Mucosa of descending colon (tissue), 3 donors: ENCODE measurements at regions of chrX and their contacts with region 1.

Region 1: DNA sequence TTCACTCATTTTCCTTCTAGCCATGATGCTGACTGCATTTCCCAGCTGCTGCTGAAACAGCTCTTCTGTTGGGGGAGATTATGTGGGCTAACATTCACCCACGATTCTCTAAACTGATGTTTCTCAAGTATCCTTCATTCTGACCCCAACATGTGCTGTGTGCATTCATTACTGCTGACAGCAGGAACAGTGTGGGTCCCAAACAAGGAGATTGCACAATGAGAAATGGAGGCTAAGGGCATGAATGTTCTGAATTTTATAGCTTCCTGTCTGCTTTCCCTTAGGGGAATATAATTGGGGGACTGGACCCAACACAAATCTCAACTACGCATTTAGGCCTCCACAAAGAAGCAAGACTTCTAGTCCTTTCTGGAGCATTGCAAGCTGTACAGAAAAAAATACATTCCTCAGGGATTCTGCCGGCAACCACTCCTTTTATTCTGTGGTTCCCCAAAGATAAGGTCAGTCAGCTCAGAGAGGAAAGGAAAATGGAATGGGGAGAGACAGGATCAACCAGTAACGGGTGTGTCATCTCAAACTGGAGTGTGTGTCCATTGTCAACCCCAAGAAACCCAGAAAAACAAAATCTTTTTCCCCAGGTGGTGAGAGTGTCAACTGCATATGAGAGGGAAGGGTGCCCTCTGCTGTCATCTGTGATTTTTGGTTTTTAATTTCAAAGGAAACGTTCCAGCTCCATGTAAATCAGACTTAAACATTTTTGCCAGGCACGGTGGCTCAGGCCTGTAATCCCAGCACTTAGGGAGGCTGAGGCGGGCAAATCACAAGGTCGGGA is 81.5 kb upstream of the EGFL6 start:
- DNase-seq: peak in 2 of 3 donors; percentile 30 to 85
- ATAC-seq: peak; percentile 75
- H3K4me3 ChIP-seq: no peak overlapping the region
- H3K4me1 ChIP-seq: peaks cover 3% of the 10 kb centered on the region
- CTCF ChIP-seq: no peak

Region 2: GRCh38 chrX:12974796-12975669 is 512.9 kb before region 1 on chrX and contains the start of gene TMSB4X:
- intact Hi-C with region 1: loop called in 1 of 2 experiments (anchors 10 kb)
- DNase-seq: peak; percentile 87 to 95 (median 92)
- ATAC-seq: peak; percentile 83
- H3K4me3 ChIP-seq: peak within 1 kb of the TSS; percentile 67
- H3K4me1 ChIP-seq: peaks cover 2% of the 10 kb centered on the region
- CTCF ChIP-seq: no peak
- total RNA-seq, gene TMSB4X: 2,288 to 5,392 (median 5,014) TPM

Region 3: DNA sequence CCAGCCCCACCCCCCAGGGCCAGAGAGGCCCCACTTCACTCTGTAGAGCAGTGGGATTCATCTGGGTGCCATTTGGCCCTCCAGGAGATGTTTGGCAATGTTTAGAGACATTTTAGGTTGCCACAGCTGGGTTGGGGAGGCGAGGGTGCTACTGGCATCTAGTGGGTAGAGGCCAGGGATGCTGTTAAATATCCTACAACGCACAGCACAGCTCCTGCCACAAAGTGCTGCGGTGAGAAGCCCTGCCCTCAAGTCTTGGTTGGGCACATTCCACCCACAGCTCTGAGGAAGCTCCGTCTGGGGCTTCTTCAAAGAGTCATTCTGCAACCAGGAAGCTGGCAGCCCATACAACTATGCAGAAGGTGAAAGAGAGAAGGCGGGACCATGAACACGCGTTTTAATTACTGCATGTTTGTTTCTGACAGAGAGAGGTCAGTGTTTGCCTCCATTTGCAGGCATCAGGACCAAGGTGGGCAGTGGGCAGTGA is 395.4 kb before region 1 on chrX:
- intact Hi-C with region 1: loop called in 1 of 2 experiments (anchors 5 kb)
- DNase-seq: peak; percentile 63 to 81 (median 76)
- ATAC-seq: peak; percentile 90
- H3K4me3 ChIP-seq: no peak overlapping the region
- H3K4me1 ChIP-seq: peaks cover 4% of the 10 kb centered on the region
- CTCF ChIP-seq: no peak